H1 (cell line): ENCODE measurements at regions of chr12 and their contacts with region 1.

Region 1: GRCh38 chr12:49967042-49967776 is 5.5 kb downstream of the AQP5 start:
- DNase-seq: peak; percentile 63 to 99
- H3K4me3 ChIP-seq: peak overlapping the region in 3 of 4 experiments; percentile 31 to 53 (median 45); a peak in 6 of 8 replicates
- H3K27ac ChIP-seq: no peak overlapping the region
- H3K4me1 ChIP-seq: peaks cover 0 to 9% (median 3%) of the 10 kb centered on the region in 4 experiments; a peak in 5 of 7 replicates
- H3K27me3 ChIP-seq: peaks cover 0 to 40% (median 21%) of the 10 kb centered on the region in 4 experiments; a peak in 6 of 7 replicates
- CTCF ChIP-seq: peak in 2 of 3 experiments; percentile 96; a peak in 3 of 4 replicates
- EP300 ChIP-seq: no peak
- POLR2A ChIP-seq: no peak
- RAD21 ChIP-seq: peak; percentile 90 to 94

Region 2: DNA sequence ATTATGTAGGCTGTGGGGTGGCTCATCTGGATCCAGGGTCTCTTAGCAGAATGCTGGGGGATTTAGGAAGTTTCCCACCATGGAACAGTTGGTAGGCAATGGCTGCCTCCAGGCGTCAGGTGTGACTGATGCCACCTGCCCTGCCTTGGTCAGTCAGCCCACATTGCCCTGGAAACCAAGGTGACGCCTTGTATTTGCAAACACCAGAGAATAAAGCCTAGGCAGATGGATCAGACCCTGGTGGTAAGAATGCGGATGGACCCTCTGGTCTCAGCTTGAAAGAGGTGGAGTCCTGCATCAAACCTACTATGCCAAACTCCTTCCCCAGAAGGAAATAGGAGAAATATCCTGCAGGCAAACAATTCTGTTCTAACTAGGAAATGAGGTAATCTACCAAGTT is 177.2 kb before region 1 on chr12:
- CTCF ChIA-PET with region 1: no interaction called
- POLR2A ChIA-PET with region 1: no interaction called
- DNase-seq: peak in 1 of 2 experiments; percentile 19
- H3K4me3 ChIP-seq: no peak overlapping the region
- H3K27ac ChIP-seq: 0 out of 2 replicates have a peak overlapping the region, but pooled peaks have one; percentile 12
- H3K4me1 ChIP-seq: peaks cover 0 to 4% (median 0%) of the 10 kb centered on the region in 4 experiments; a peak in 2 of 7 replicates
- H3K27me3 ChIP-seq: no peaks in the 10 kb centered on the region
- CTCF ChIP-seq: peak; percentile 7 to 64 (median 37)
- EP300 ChIP-seq: no peak
- POLR2A ChIP-seq: no peak
- RAD21 ChIP-seq: peak in 1 of 2 experiments; percentile 29; a peak in 1 of 4 replicates

Region 3: GRCh38 chr12:49882851-49883470 is 84.2 kb before region 1 on chr12:
- CTCF ChIA-PET with region 1: interaction called, 13 read pairs
- POLR2A ChIA-PET with region 1: no interaction called
- DNase-seq: no peak
- H3K4me3 ChIP-seq: no peak overlapping the region
- H3K27ac ChIP-seq: no peak overlapping the region
- H3K4me1 ChIP-seq: peaks cover 0 to 29% (median 13%) of the 10 kb centered on the region in 4 experiments; a peak in 6 of 7 replicates
- H3K27me3 ChIP-seq: no peaks in the 10 kb centered on the region; a peak in 1 of 7 replicates
- CTCF ChIP-seq: peak in 1 of 3 experiments; percentile 39; a peak in 1 of 4 replicates
- EP300 ChIP-seq: no peak
- POLR2A ChIP-seq: no peak
- RAD21 ChIP-seq: peak in 1 of 2 experiments; percentile 32; a peak in 2 of 4 replicates

Region 4: DNA sequence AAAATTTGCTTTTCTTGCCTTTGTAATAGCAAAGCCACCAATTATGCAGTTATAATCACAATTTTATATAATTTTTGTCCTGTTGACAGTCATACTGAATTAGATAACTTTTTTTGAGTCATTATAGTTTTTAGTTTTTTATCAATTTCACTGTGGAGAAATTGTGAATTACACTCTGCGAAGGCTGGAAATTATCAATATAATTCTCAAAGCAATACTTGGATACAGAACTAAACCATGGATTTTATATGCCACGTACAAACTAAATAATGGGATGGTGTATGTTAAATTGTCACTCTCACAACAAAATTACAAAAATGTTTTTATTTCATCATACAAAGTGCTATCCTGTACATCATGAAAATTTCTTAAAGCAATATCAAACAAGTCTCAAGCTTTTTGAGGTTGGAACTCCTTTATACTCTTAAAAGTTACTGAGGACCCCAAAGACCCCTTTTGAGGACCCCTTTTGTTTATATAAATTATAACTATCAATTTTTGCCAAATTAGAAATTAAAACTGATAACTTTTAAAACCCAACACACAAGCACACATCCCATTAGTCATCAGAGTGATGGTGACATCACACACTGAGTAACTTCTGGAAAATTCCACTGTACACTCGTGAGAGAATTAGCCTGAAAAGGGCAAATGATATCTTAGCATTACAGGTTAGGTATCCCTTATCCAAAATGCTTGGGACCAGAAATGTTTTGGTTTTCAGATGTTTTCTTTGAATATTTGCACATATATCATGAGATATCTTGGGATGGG is 36.5 kb before region 1 on chr12:
- CTCF ChIA-PET with region 1: interaction called, 21 read pairs
- POLR2A ChIA-PET with region 1: no interaction called
- DNase-seq: no peak
- H3K4me3 ChIP-seq: no peak overlapping the region
- H3K27ac ChIP-seq: no peak overlapping the region
- H3K4me1 ChIP-seq: no peaks in the 10 kb centered on the region
- H3K27me3 ChIP-seq: no peaks in the 10 kb centered on the region; a peak in 1 of 7 replicates
- CTCF ChIP-seq: no peak
- EP300 ChIP-seq: no peak
- POLR2A ChIP-seq: no peak
- RAD21 ChIP-seq: no peak

Region 5: GRCh38 chr12:49998453-49998852 is 31.2 kb after region 1 on chr12:
- CTCF ChIA-PET with region 1: interaction called, 29 read pairs
- POLR2A ChIA-PET with region 1: no interaction called
- DNase-seq: no peak
- H3K4me3 ChIP-seq: no peak overlapping the region
- H3K27ac ChIP-seq: no peak overlapping the region
- H3K4me1 ChIP-seq: no peaks in the 10 kb centered on the region
- H3K27me3 ChIP-seq: no peaks in the 10 kb centered on the region
- CTCF ChIP-seq: peak in 1 of 3 experiments; percentile 24; a peak in 1 of 4 replicates
- EP300 ChIP-seq: no peak
- POLR2A ChIP-seq: no peak
- RAD21 ChIP-seq: no peak

Region 6: DNA sequence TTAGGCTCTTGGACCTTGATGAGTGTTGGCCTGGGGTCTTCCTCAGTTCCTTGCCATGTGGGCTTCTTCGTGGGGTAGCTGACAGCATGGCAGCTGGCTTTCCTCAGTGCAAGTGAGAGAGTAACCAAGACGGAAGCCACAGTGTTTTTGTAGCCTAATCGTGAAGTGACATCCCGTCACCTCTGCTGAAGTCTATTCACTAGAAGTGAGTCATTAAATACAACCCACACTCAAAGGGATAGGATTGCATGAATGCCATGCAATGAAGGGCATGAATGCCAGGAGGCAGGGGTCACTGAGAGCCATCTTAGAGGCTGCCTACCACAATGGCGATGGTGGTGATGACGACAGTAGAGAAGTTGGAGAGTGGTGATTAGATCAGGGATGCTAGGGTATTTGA is 76.6 kb after region 1 on chr12:
- CTCF ChIA-PET with region 1: interaction called, 138 read pairs
- POLR2A ChIA-PET with region 1: interaction called, 3 read pairs
- DNase-seq: no peak
- H3K4me3 ChIP-seq: no peak overlapping the region
- H3K27ac ChIP-seq: no peak overlapping the region
- H3K4me1 ChIP-seq: no peaks in the 10 kb centered on the region
- H3K27me3 ChIP-seq: peaks cover 0 to 5% (median under 1%) of the 10 kb centered on the region in 4 experiments; a peak in 3 of 7 replicates
- CTCF ChIP-seq: no peak
- EP300 ChIP-seq: no peak
- POLR2A ChIP-seq: no peak
- RAD21 ChIP-seq: no peak